Left ventricle myocardium inferior (tissue), 1 donor: ENCODE measurements at regions of chr17 and their contacts with region 1.

Region 1: DNA sequence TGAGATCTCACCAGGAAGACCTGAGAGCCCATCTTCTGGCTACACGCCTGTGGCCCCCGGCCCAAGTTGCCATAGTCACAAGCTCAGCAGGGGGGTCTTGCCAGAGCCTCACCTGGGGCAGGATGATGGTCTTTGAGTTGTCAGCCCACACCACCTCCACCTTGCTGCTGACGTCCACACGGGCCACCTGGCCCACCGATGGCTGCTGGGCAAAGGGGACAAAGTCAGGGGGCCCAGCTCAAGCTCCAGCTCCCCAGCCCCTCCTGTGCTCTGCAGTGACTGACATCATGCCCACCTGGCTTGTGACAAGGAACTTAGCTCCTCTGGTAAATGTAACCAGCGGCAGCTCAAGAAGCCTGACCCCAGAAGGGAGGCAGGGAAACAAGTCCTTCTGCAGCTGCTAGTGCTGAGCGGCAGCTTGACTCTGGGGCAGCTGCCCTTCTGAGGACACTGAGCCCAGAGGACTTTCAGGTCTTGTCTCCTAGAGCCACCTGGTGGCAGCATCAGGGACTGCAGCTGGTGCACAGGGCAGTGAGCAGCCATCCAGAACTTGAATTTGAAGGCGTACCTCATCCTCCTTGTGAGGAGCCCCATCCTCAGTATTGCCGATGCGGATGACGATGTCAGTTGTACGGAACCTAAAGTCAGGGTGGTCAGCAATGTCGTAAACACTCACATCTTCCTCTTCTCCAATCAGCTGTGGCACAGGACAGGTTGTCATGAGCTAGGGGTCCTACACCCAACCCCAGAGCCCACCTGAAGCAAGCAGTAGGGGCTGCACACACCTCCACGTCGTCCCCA is 13.5 kb downstream of the SPHK1 start:
- DNase-seq: peak; percentile 86
- H3K4me3 ChIP-seq: no peak overlapping the region
- H3K27ac ChIP-seq: peak overlapping the region; percentile 54
- H3K4me1 ChIP-seq: peaks cover 23% of the 10 kb centered on the region
- H3K27me3 ChIP-seq: no peaks in the 10 kb centered on the region
- CTCF ChIP-seq: peak; percentile 100

Region 2: GRCh38 chr17:76252040-76252954 is 145.6 kb before region 1 on chr17:
- intact Hi-C with region 1: no loop called
- DNase-seq: no peak
- H3K4me3 ChIP-seq: no peak overlapping the region
- H3K27ac ChIP-seq: peak overlapping the region; percentile 62
- H3K4me1 ChIP-seq: peaks cover 11% of the 10 kb centered on the region
- H3K27me3 ChIP-seq: no peaks in the 10 kb centered on the region
- CTCF ChIP-seq: no peak

Region 3: DNA sequence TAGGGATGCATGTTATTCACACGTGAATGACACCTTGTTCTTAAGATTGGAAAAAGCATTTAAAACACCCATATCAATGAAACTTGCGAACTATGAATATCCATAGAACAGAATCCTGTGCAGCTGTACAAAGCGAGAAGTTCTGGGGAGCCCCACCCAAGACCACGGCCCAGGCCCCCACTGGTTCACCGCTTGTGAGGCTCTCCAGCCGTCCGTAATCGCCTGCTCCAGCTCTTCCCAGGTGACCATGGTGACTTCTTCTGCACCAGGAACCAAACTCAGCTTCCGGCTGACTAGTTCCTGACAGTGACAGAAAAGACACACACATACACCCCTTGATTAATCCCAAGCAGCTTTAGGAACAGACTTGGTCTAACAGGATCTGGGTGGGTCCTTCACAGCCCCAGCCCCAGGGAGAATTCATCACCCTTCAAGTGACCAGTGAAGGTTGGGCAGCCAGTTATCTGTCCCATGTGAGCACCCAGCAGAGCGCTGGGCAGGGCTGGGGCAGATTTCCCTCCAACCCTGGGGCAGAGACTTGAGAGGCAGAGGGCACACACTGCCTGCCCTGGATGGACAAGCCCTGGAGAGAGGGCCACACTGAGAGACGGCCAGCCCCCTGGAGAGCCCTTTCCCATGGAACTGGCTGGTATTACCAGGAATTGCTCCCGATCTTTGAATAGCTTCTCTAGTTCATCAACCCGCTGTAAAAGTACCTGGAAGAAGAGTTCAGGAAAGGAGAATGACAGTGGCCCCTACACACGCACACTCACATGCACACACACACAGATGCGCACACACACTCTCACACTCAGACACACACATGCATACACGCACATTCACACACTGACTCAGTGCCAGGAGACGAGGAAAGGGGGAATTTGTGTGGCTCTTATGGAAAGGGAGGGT is 93.4 kb before region 1 on chr17:
- intact Hi-C with region 1: loop called (anchors 5 kb)
- DNase-seq: no peak
- H3K4me3 ChIP-seq: no peak overlapping the region
- H3K27ac ChIP-seq: no peak overlapping the region
- H3K4me1 ChIP-seq: no peaks in the 10 kb centered on the region
- H3K27me3 ChIP-seq: no peaks in the 10 kb centered on the region
- CTCF ChIP-seq: no peak

Region 4: DNA sequence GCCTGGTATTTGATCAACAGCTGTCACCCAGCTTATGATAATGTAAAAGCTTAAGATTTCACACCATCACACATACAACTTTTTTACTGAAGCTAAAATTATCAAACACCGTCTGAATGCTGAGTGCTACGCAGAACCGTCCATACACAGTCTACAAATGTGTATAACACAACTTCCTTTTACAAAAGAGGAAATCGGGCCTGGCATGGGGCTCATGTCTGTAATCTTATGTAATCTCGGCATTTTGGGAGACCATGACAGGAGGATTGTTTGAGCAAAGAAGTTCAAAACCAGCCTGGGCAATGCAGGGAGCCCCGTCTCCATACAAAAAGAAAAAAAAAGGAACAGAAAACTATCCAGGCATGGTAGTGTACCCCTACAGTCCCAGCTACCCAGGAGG is 70.2 kb before region 1 on chr17:
- intact Hi-C with region 1: no loop called
- DNase-seq: no peak
- H3K4me3 ChIP-seq: no peak overlapping the region
- H3K27ac ChIP-seq: no peak overlapping the region
- H3K4me1 ChIP-seq: peaks cover 15% of the 10 kb centered on the region
- H3K27me3 ChIP-seq: no peaks in the 10 kb centered on the region
- CTCF ChIP-seq: no peak